Pancreas (tissue), 10 donors: ENCODE measurements at regions of chr12 and their contacts with region 1.

Region 1: GRCh38 chr12:11015775-11016430 is 6.5 kb downstream of the TAS2R19 start:
- DNase-seq: no peak
- ATAC-seq: peak in 2 of 4 donors; percentile 24 to 28
- H3K4me3 ChIP-seq: no peak overlapping the region
- H3K27ac ChIP-seq: no peak overlapping the region
- H3K4me1 ChIP-seq: no peaks in the 10 kb centered on the region
- H3K27me3 ChIP-seq: no peaks in the 10 kb centered on the region
- CTCF ChIP-seq: no peak

Region 2: GRCh38 chr12:10721651-10722501 is 294.0 kb before region 1 on chr12:
- intact Hi-C with region 1: no loop called
- DNase-seq: peak; percentile 96 to 99 (median 98)
- ATAC-seq: peak; percentile 83 to 90 (median 88)
- H3K4me3 ChIP-seq: peak overlapping the region; percentile 80 to 93 (median 84)
- H3K27ac ChIP-seq: peak overlapping the region; percentile 95 to 98 (median 98)
- H3K4me1 ChIP-seq: peaks cover 19 to 46% (median 26%) of the 10 kb centered on the region in 3 donors
- H3K27me3 ChIP-seq: no peaks in the 10 kb centered on the region
- CTCF ChIP-seq: no peak

Region 3: DNA sequence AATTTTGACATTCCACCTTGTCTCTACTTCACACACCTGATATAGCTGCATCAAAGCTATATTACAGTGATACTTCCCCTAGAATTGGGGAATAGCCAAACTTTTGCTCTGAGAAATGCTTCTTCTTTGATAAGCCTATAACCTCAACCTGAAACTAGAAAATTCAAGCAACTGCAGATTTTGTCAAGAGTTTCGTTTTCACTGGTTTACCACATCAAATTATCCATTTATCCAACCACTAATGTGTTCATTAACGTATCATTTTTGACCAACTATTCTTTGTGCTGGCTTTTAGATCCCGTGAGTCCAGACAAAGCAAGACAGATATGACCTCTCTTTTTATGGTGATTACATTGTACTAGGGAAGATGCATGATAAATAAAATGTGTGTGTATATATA is 59.7 kb after region 1 on chr12:
- intact Hi-C with region 1: loop called in 1 of 3 experiments (anchors 10 kb)
- DNase-seq: no peak
- ATAC-seq: no peak
- H3K4me3 ChIP-seq: no peak overlapping the region
- H3K27ac ChIP-seq: no peak overlapping the region
- H3K4me1 ChIP-seq: no peaks in the 10 kb centered on the region
- H3K27me3 ChIP-seq: no peaks in the 10 kb centered on the region
- CTCF ChIP-seq: no peak

Region 4: DNA sequence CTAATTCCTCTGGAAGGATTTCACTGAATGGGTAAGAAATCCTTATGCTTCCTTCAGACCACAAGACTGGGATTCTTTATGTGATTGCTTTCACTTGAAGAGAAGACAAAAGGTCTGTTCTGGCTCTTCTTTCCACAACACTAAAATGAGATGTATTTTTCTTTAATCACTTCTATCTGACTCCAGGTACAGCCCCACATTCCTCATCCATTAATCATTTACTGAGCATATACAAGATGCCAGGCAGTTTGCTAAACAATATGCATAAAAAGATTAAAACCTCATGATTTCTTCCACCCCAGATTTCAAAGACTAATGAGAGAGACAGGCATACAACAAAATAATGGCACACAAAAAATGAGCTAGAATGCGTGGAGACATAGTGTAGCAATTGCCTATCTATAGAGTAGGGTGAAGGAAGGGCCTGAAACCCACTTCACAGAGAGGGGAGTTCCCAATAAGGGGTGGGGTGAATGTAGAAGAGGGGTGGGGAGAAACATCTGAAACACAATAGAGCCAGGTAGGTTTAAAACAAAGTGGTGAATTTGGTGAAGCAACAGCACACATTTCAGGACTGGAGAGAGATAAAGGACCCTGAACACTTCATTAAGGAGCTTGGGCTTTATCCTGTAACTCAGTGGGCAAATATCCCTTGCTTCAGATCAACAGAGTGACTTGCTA is 444.6 kb after region 1 on chr12:
- intact Hi-C with region 1: no loop called
- DNase-seq: no peak
- ATAC-seq: no peak
- H3K4me3 ChIP-seq: no peak overlapping the region
- H3K27ac ChIP-seq: no peak overlapping the region
- H3K4me1 ChIP-seq: no peaks in the 10 kb centered on the region
- H3K27me3 ChIP-seq: no peaks in the 10 kb centered on the region
- CTCF ChIP-seq: no peak